A673 (cell line): ENCODE measurements at regions of chr7 and their contacts with region 1.

Region 1: GRCh38 chr7:91973639-91974038 is 33.0 kb downstream of the AKAP9 start:
- DNase-seq: no peak
- H3K4me3 ChIP-seq: no peak overlapping the region
- H3K27ac ChIP-seq: no peak overlapping the region
- H3K4me1 ChIP-seq: no peaks in the 10 kb centered on the region
- H3K27me3 ChIP-seq: no peaks in the 10 kb centered on the region
- CTCF ChIP-seq: no peak

Region 2: GRCh38 chr7:91683823-91684222 is 289.8 kb before region 1 on chr7:
- CTCF ChIA-PET with region 1: no interaction called
- POLR2A ChIA-PET with region 1: no interaction called
- intact Hi-C with region 1: no loop called
- DNase-seq: peak; percentile 76
- H3K4me3 ChIP-seq: no peak overlapping the region
- H3K27ac ChIP-seq: no peak overlapping the region
- H3K4me1 ChIP-seq: peaks cover 11% of the 10 kb centered on the region
- H3K27me3 ChIP-seq: no peaks in the 10 kb centered on the region
- CTCF ChIP-seq: no peak

Region 3: DNA sequence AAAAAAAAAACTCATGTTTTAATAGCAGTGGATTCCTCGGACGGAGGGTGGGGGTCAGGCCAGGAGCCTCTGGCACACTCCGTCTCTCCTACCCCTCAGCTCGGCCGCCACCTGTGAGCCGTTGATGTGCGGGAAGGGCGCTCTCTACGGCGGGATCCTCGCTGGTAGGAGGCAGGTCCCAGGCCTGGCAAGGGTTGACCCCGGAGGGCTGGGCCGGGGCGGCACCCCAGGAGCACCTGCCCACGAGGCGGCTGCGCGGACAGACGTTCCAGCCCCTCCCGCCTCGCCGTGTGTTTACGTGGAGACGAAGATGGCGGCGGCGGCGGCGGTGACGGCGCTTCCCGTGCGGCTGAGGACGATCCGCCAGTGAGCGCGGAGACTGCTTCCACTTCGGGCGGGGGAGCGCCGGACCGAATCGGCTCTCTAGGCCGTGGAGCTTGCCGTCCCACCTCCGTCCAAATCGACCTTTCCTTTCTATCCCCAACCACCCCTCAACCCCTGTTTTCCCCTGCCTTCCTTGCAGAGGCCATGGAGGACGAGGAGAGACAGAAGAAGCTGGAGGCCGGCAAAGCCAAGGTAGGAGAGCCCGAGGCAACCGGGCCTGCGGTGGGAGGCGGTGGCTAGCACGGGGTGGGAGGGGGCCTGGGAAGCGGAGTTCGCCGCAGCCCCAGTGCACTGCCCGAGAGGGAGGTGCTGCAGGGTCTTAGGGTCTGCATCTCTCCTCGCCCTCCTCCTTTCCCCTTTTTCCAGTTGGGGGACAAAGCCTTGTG is 32.9 kb before region 1 on chr7 and contains the start of gene AKAP9:
- CTCF ChIA-PET with region 1: interaction called, 10 read pairs
- POLR2A ChIA-PET with region 1: no interaction called
- intact Hi-C with region 1: no loop called
- DNase-seq: peak; percentile 82
- H3K4me3 ChIP-seq: peak within 1 kb of the TSS; percentile 82
- H3K27ac ChIP-seq: peak within 1 kb of the TSS; percentile 92
- H3K4me1 ChIP-seq: peaks cover 15% of the 10 kb centered on the region
- H3K27me3 ChIP-seq: no peaks in the 10 kb centered on the region
- CTCF ChIP-seq: no peak
- total RNA-seq, gene AKAP9: 62.1 and 62.6 TPM in 2 replicates

Region 4: GRCh38 chr7:92598310-92598981 is 624.8 kb after region 1 on chr7:
- CTCF ChIA-PET with region 1: no interaction called
- POLR2A ChIA-PET with region 1: no interaction called
- intact Hi-C with region 1: no loop called
- DNase-seq: no peak
- H3K4me3 ChIP-seq: no peak overlapping the region
- H3K27ac ChIP-seq: no peak overlapping the region
- H3K4me1 ChIP-seq: no peaks in the 10 kb centered on the region
- H3K27me3 ChIP-seq: peaks cover 7% of the 10 kb centered on the region
- CTCF ChIP-seq: no peak